Activated naive CD4-positive, alpha-beta T cell treated with anti-CD3 and anti-CD28 coated beads for 36 hours (primary cell): ENCODE measurements at regions of chr18 and their contacts with region 1.

Region 1: DNA sequence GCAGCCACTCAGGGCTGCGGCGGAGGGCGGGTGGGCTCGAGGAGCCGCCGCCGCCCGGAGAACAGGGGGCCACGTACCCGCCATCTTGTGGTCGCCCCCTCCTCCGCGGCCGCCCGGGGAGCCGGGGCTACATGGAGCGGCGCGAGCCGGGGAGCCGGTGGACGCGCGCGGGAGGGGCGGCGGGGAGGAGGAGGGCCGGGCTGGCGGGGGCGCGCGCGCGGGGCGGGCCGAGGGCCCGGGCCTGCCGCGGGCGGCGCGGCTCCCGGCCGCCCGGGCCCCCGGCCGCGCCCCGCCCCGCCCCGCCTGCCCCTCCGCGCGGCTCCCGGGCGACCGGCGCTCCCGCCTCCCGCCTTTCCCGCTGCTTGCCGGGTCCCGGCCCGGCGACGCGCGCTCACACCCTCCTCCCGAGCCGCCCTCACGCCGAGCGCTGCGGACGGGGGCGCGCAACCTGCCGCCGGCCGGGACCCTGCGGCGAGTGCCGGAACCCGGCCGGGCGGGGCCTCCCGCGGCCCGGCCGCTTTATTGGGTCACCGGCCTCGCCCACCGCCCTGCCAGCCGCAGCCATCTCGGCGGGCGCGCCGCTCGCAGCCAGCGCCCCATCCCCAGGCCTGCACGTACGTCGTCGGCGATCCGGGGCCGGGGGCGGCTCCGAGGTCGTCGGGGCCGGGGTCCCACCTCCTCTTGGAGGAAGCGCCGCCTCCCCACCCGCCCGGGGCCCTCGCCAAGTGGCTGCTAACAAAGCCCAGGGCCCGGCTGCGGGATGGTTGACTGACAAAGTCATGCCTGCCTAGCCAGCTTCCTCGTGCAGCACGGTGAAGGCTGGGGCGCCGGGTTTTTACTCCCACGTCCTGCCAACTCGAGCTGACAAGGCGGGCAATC is at the start of gene PPP4R1:
- DNase-seq: peak; percentile 71
- H3K4me3 Mint-ChIP-seq: peak within 1 kb of the TSS; percentile 93
- H3K27ac Mint-ChIP-seq: peak within 1 kb of the TSS; percentile 77
- H3K4me1 Mint-ChIP-seq: peaks cover 29% of the 10 kb centered on the region
- H3K27me3 Mint-ChIP-seq: no peaks in the 10 kb centered on the region
- total RNA-seq, gene PPP4R1: 23.0 to 23.6 TPM

Region 2: DNA sequence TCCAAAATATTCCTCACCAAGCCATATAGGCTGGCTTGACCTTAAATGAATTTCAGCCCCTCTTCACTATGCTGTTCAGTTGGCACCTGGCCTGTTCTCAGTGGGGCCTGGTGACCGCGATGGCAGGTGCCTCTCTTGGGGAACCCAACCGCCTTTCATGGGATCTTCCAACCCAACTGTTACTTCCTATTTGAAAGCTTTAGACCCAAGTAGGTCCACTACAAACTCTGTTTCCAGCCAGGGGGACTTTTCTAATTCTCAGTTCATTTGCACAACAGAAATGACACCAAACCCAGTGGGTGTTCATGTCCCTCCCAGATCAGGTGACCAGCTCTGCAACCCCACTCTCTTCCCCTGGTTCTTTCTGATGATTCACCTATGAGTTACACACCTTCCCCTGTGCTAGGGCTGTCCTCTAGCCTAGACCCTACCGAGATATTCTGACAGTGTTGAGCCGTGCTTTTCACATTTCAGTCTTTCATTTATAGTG is 547.8 kb before region 1 on chr18:
- CTCF ChIA-PET with region 1: no interaction called
- intact Hi-C with region 1: loop called (anchors 5 kb)
- DNase-seq: no peak
- H3K4me3 Mint-ChIP-seq: no peak overlapping the region
- H3K27ac Mint-ChIP-seq: no peak overlapping the region
- H3K4me1 Mint-ChIP-seq: peaks cover 8% of the 10 kb centered on the region
- H3K27me3 Mint-ChIP-seq: peaks cover 5% of the 10 kb centered on the region

Region 3: GRCh38 chr18:9136315-9137155 is 478.1 kb before region 1 on chr18 and contains the start of gene ANKRD12:
- CTCF ChIA-PET with region 1: no interaction called
- intact Hi-C with region 1: loop called (anchors 5 kb)
- DNase-seq: peak; percentile 96
- H3K4me3 Mint-ChIP-seq: peak within 1 kb of the TSS; percentile 96
- H3K27ac Mint-ChIP-seq: peak within 1 kb of the TSS; percentile 97
- H3K4me1 Mint-ChIP-seq: peaks cover 63% of the 10 kb centered on the region
- H3K27me3 Mint-ChIP-seq: no peaks in the 10 kb centered on the region
- total RNA-seq, gene ANKRD12: 37.5 to 40.0 TPM

Region 4: DNA sequence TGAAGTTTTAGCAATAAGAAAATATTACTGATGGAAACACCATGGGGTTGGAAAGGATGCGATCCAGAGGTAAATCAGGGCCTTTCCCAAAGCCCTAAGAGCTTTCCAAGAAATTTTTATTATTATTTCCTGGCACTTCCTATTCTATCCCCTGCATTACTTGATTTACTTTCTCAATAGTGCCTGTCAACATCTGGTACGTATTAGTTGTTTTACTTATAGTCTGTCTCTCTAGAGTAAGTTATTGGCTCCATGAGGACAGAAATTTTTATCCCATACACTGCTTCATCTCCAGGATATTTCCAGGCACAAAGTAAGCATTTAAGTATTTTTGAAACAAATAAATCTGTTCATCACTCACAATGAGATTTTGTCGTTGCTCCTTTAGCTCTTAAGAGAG is 18.4 kb before region 1 on chr18:
- CTCF ChIA-PET with region 1: interaction called, 6 read pairs
- intact Hi-C with region 1: loop called (anchors 2 kb)
- DNase-seq: no peak
- H3K4me3 Mint-ChIP-seq: no peak overlapping the region
- H3K27ac Mint-ChIP-seq: no peak overlapping the region
- H3K4me1 Mint-ChIP-seq: peaks cover 22% of the 10 kb centered on the region
- H3K27me3 Mint-ChIP-seq: no peaks in the 10 kb centered on the region

Region 5: DNA sequence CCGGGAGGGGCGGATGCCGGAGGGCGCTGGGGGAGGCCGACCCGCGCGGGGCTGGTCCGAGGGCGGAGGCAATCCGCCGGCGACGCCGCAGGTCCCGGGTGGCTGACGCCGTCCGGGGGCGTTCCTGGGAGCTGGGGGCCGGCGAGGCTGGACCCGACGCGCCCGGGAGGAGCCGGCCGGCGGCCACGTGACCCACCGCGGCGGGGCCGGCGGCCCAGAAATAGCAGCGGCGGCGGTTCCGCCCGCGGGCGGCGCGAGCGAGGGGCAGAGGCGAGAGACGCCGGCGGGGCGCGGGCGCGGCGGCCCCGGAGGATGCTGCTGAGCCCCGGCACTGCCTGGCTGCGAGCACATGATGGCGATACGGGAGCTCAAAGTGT is 93.4 kb after region 1 on chr18 and contains the start of gene RAB31:
- CTCF ChIA-PET with region 1: interaction called, 6 read pairs
- intact Hi-C with region 1: loop called (anchors 2 kb)
- DNase-seq: peak; percentile 24
- H3K4me3 Mint-ChIP-seq: peak within 1 kb of the TSS; percentile 74
- H3K27ac Mint-ChIP-seq: no peak within 1 kb of the TSS
- H3K4me1 Mint-ChIP-seq: peaks cover 28% of the 10 kb centered on the region
- H3K27me3 Mint-ChIP-seq: peaks cover 80% of the 10 kb centered on the region
- total RNA-seq, gene RAB31: 0.38 to 0.89 TPM

Region 6: GRCh38 chr18:10525371-10526210 is 911.0 kb after region 1 on chr18 and contains the start of gene NAPG:
- CTCF ChIA-PET with region 1: no interaction called
- intact Hi-C with region 1: loop called (anchors 5 kb)
- DNase-seq: peak; percentile 88
- H3K4me3 Mint-ChIP-seq: peak within 1 kb of the TSS; percentile 95
- H3K27ac Mint-ChIP-seq: peak within 1 kb of the TSS; percentile 89
- H3K4me1 Mint-ChIP-seq: peaks cover 45% of the 10 kb centered on the region
- H3K27me3 Mint-ChIP-seq: no peaks in the 10 kb centered on the region
- total RNA-seq, gene NAPG: 20.2 to 21.0 TPM